Mammary epithelial cell (primary cell): ENCODE measurements at regions of chr2 and their contacts with region 1.

Region 1: DNA sequence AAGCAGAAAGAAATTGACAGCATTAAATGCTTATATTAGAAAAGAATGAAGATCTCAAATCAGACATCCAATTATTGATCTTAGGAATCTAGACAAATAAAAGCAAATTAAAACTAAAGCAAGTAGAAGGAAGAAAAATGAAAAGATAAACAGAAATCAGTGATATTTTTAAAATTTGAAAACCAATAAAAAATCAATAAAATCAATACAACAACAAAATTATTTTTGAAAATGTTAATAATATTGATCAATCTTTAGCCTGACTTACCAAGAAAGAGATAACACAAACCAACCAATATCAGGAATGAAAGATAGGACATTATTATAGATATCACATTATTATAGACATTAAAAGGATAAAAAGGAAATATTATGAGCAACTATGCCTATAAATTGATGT is 272.2 kb upstream of the MEIS1 start:
- DNase-seq: no peak
- H3K4me3 ChIP-seq: no peak overlapping the region
- H3K27ac ChIP-seq: no peak overlapping the region
- H3K4me1 ChIP-seq: no peaks in the 10 kb centered on the region
- H3K27me3 ChIP-seq: no peaks in the 10 kb centered on the region
- CTCF ChIP-seq: no peak

Region 2: GRCh38 chr2:66228128-66228547 is 65.4 kb after region 1 on chr2:
- CTCF ChIA-PET with region 1: no interaction called
- dilution Hi-C with region 1: no loop called
- in situ Hi-C with region 1: no loop called
- intact Hi-C with region 1: loop called (anchors 2 kb)
- DNase-seq: no peak
- H3K4me3 ChIP-seq: no peak overlapping the region
- H3K27ac ChIP-seq: no peak overlapping the region
- H3K4me1 ChIP-seq: no peaks in the 10 kb centered on the region
- H3K27me3 ChIP-seq: no peaks in the 10 kb centered on the region
- CTCF ChIP-seq: no peak